ENCODE measurements at regions of chr17 and their contacts with region 1.

Region 1: GRCh38 chr17:41026715-41027471 is at the start of gene KRTAP1-5:
- DNase-seq: no peak
- H3K4me3 ChIP-seq: no peak within 1 kb of the TSS
- H3K27ac ChIP-seq: no peak within 1 kb of the TSS
- H3K4me1 ChIP-seq: no peaks in the 10 kb centered on the region
- H3K27me3 ChIP-seq: peaks cover 2 to 4% of the 10 kb centered on the region in 2 experiments
- CTCF ChIP-seq: no peak
- POLR2A ChIP-seq: no peak
- total RNA-seq, gene KRTAP1-5: not detected in 2 replicates

Region 2: GRCh38 chr17:40279407-40279806 is 747.5 kb before region 1 on chr17:
- CTCF ChIA-PET with region 1: no interaction called
- POLR2A ChIA-PET with region 1: no interaction called
- dilution Hi-C with region 1: no loop called
- intact Hi-C with region 1: loop called (anchors 10 kb)
- DNase-seq: no peak
- H3K4me3 ChIP-seq: no peak overlapping the region
- H3K27ac ChIP-seq: no peak overlapping the region
- H3K4me1 ChIP-seq: peaks cover 13% of the 10 kb centered on the region
- H3K27me3 ChIP-seq: no peaks in the 10 kb centered on the region
- CTCF ChIP-seq: no peak
- POLR2A ChIP-seq: no peak

Region 3: GRCh38 chr17:40433551-40434415 is 593.1 kb before region 1 on chr17:
- CTCF ChIA-PET with region 1: no interaction called
- POLR2A ChIA-PET with region 1: no interaction called
- dilution Hi-C with region 1: no loop called
- intact Hi-C with region 1: no loop called
- DNase-seq: no peak
- H3K4me3 ChIP-seq: no peak overlapping the region
- H3K27ac ChIP-seq: no peak overlapping the region
- H3K4me1 ChIP-seq: no peaks in the 10 kb centered on the region
- H3K27me3 ChIP-seq: peaks cover 0 to 2% of the 10 kb centered on the region in 2 experiments
- CTCF ChIP-seq: peak; percentile 38 to 55
- POLR2A ChIP-seq: no peak

Region 4: DNA sequence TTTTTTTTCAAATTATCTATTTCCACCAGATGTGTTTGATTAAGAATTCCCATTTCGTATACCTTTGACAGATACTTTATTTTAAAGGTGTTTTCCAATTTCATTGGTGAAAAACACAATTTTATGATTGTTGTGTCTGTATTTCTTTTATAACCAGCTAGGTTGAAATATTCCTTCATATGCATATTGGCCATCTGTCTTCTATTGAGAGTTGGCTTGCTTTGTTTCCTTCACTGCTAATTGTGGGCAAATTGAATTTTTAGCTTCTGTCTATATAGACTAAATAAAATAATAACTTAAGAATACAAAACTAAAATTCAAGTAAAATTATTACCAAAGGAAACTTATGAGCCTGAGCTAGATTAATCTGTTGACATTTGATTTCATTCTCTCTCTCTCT is 31.8 kb before region 1 on chr17:
- CTCF ChIA-PET with region 1: no interaction called
- POLR2A ChIA-PET with region 1: no interaction called
- dilution Hi-C with region 1: no loop called
- intact Hi-C with region 1: no loop called
- DNase-seq: no peak
- H3K4me3 ChIP-seq: no peak overlapping the region
- H3K27ac ChIP-seq: no peak overlapping the region
- H3K4me1 ChIP-seq: no peaks in the 10 kb centered on the region
- H3K27me3 ChIP-seq: peaks cover 2 to 3% of the 10 kb centered on the region in 2 experiments
- CTCF ChIP-seq: no peak
- POLR2A ChIP-seq: no peak

Measured in endothelial cell of umbilical vein (primary cell).